ENCODE measurements at regions of chr1 and their contacts with region 1.

Region 1: DNA sequence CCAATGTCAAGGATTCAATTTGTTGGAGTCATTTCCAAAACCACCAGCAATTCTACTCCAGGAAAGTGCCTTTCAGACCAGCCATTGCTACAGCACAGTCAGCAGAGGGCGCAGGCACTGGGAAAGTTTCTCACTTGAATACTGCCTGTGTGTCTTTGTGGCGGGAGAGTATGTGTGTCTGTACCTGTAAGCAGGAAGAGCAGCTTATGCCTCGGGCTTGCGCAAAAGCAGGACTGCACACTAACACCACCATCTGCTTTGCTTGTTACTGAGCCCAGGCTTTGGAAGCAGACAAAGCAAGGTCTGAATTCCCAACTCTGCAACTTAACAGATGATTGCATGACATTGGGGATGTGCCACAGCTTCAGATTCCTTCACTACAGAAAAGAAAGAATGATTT is 7.0 kb upstream of the CTSE start:
- DNase-seq: peak; percentile 87
- ATAC-seq: peak; percentile 98
- H3K4me3 Mint-ChIP-seq: no peak overlapping the region
- H3K27ac Mint-ChIP-seq: no peak overlapping the region
- H3K4me1 Mint-ChIP-seq: peaks cover 10% of the 10 kb centered on the region
- H3K27me3 Mint-ChIP-seq: peaks cover 21% of the 10 kb centered on the region

Region 2: DNA sequence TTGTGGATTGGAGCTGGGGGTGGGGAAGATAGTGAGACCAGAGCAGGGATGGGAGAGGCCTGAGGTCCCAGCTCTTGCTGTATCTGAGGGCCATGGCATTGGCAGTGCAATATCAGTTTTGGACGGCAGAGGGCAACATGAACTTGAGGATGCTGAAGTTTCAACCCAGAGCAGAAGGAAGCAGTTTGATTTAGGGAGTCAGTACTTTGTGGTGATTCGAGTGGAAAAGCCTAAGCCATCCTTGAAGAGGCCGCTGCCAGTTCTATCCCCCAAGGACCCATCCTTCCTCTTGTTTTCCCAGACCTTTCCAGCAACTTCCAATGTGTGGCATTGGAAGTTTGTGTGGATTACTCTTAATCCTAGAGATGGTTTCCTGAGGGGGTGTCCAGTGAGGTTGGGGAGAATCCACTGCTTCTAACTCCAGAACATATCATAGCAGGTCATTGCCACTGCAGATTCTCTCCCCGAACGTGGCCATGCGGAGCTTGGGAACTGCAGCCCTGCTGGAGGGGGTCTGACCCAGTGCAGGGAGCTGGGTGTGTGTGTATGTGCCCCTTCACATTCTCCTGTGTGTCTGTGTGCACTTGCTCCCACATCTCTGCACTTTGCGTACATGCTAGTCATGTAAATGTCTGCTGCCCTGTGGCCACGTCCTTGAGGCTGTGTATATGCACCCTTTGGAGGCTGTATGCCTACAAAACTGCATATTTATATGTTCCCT is 111.5 kb before region 1 on chr1:
- CTCF ChIA-PET with region 1: interaction called, 5 read pairs
- POLR2A ChIA-PET with region 1: no interaction called
- intact Hi-C with region 1: loop called in 1 of 2 experiments (anchors 1 kb)
- DNase-seq: peak; percentile 86
- ATAC-seq: peak; percentile 86
- H3K4me3 Mint-ChIP-seq: no peak overlapping the region
- H3K27ac Mint-ChIP-seq: no peak overlapping the region
- H3K4me1 Mint-ChIP-seq: no peaks in the 10 kb centered on the region
- H3K27me3 Mint-ChIP-seq: no peaks in the 10 kb centered on the region

Region 3: GRCh38 chr1:206041640-206042039 is 10.9 kb after region 1 on chr1:
- CTCF ChIA-PET with region 1: interaction called, 12 read pairs
- POLR2A ChIA-PET with region 1: interaction called, 3 read pairs
- intact Hi-C with region 1: no loop called
- DNase-seq: no peak
- ATAC-seq: no peak
- H3K4me3 Mint-ChIP-seq: no peak overlapping the region
- H3K27ac Mint-ChIP-seq: no peak overlapping the region
- H3K4me1 Mint-ChIP-seq: peaks cover 16% of the 10 kb centered on the region
- H3K27me3 Mint-ChIP-seq: peaks cover 7% of the 10 kb centered on the region

Region 4: DNA sequence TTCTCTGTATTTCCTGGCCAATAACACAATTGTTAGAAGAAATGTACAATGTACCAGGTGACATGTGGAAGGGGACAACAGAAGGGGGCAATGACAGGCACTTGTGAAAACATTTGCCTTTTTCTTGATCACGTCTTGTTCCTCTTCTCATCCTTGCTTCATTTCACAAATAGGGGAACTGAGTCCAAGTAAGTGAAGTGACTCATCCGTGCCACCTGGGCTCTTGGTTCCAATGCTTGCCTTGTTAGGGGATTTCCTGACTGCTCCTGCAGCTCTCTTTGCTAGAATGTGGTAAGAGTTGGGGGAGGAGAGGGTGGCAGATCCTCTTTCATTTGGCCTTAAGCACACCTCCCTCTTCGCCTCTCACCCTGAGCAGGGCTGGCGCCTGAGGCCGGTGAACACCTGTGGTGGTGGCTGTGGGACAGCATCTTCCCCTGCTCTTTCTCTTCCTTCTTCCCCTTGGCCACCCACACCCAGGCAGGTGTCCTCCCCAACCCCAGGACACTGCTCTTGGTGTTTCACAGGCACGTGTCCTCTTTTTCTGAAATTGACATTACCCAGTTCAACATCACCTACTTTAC is 20.0 kb after region 1 on chr1:
- CTCF ChIA-PET with region 1: interaction called, 12 read pairs
- POLR2A ChIA-PET with region 1: no interaction called
- intact Hi-C with region 1: no loop called
- DNase-seq: peak; percentile 82
- ATAC-seq: peak; percentile 91
- H3K4me3 Mint-ChIP-seq: peak overlapping the region; percentile 2
- H3K27ac Mint-ChIP-seq: peak overlapping the region; percentile 87
- H3K4me1 Mint-ChIP-seq: peaks cover 41% of the 10 kb centered on the region
- H3K27me3 Mint-ChIP-seq: peaks cover 5% of the 10 kb centered on the region

Region 5: DNA sequence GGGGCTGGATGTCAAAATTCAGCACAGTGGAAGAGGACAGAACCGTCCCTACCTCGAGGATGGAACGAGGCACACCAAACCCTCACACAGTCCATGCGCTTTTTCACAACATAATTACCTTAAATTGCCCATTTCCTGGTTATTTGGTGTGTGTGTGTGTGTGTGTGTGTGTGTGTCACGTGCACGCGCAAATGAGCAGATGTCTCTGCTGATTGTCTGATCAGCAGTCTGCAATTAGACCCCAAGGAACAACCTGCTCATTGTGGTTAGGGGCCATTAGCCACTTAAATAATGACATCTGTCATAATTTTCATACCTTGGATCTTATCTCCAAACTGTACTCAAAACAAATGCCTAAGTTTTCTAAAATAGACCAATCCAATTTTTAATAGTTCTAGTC is 63.3 kb after region 1 on chr1:
- CTCF ChIA-PET with region 1: interaction called, 16 read pairs
- POLR2A ChIA-PET with region 1: no interaction called
- intact Hi-C with region 1: no loop called
- DNase-seq: no peak
- ATAC-seq: no peak
- H3K4me3 Mint-ChIP-seq: no peak overlapping the region
- H3K27ac Mint-ChIP-seq: no peak overlapping the region
- H3K4me1 Mint-ChIP-seq: no peaks in the 10 kb centered on the region
- H3K27me3 Mint-ChIP-seq: peaks cover 5% of the 10 kb centered on the region

Region 6: DNA sequence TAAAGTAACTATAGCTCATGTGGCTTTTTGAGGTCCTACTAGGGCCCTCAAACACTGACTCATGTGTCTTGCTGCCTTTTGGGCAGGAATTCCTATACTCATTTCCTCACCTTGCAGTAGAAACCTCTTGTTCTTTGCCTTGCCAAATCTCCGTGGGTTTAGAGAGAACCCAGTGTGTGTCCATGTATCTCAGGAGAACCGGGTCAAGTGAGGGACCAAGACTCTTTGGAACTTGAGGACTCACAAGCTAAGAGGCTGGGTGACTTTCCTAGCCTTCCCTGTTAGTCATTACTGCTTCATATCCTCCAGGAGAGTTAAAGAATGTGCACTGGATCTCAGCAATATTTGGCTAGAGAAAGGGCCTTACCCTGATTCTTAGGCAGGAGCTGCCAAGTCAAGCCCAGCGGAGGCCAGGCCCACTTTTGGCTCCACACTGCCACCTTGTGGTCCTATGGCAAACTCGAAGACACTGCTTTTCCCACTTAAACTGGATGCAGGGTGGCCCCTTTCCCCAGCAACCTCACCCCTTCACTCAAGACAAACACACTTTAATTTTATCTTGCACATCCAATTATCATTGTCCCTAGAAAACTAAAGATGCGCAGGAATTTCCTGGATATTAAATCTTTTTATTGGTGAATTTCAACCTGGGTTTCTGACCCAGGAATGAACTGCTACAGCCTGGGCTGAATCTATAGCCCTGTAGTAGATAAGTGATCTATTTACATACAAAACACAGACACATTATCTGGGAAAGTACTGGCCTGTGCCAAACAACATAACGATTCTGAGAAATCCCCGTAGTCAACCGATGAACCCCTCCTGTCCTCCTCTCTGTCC is 75.8 kb after region 1 on chr1:
- CTCF ChIA-PET with region 1: interaction called, 194 read pairs
- POLR2A ChIA-PET with region 1: no interaction called
- intact Hi-C with region 1: loop called (anchors 1 kb)
- DNase-seq: peak; percentile 88
- ATAC-seq: peak; percentile 90
- H3K4me3 Mint-ChIP-seq: no peak overlapping the region
- H3K27ac Mint-ChIP-seq: no peak overlapping the region
- H3K4me1 Mint-ChIP-seq: no peaks in the 10 kb centered on the region
- H3K27me3 Mint-ChIP-seq: no peaks in the 10 kb centered on the region

Region 7: GRCh38 chr1:206114692-206115640 is 84.3 kb after region 1 on chr1:
- CTCF ChIA-PET with region 1: interaction called, 16 read pairs
- POLR2A ChIA-PET with region 1: no interaction called
- intact Hi-C with region 1: no loop called
- DNase-seq: no peak
- ATAC-seq: no peak
- H3K4me3 Mint-ChIP-seq: no peak overlapping the region
- H3K27ac Mint-ChIP-seq: no peak overlapping the region
- H3K4me1 Mint-ChIP-seq: peaks cover 8% of the 10 kb centered on the region
- H3K27me3 Mint-ChIP-seq: peaks cover 30% of the 10 kb centered on the region

Measured in activated CD4-positive, alpha-beta T cell treated with anti-CD3 and anti-CD28 coated beads for 36 hours (primary cell).